CD8-positive, alpha-beta T cell (primary cell): ENCODE measurements at regions of chr12 and their contacts with region 1.

Region 1: GRCh38 chr12:42023733-42024494 is 120.8 kb downstream of the GXYLT1 start:
- DNase-seq: peak; percentile 41 to 82 (median 66)
- ATAC-seq: peak; percentile 90
- H3K4me3 ChIP-seq: peak overlapping the region; percentile 32 to 47
- H3K4me3 Mint-ChIP-seq: peak overlapping the region; percentile 78
- H3K27ac ChIP-seq: no peak overlapping the region
- H3K27ac Mint-ChIP-seq: no peak overlapping the region
- H3K4me1 ChIP-seq: peaks cover 4% of the 10 kb centered on the region
- H3K4me1 Mint-ChIP-seq: peaks cover 9% of the 10 kb centered on the region
- H3K27me3 ChIP-seq: no peaks in the 10 kb centered on the region
- H3K27me3 Mint-ChIP-seq: peaks cover 24% of the 10 kb centered on the region
- CTCF ChIP-seq: peak; percentile 95

Region 2: DNA sequence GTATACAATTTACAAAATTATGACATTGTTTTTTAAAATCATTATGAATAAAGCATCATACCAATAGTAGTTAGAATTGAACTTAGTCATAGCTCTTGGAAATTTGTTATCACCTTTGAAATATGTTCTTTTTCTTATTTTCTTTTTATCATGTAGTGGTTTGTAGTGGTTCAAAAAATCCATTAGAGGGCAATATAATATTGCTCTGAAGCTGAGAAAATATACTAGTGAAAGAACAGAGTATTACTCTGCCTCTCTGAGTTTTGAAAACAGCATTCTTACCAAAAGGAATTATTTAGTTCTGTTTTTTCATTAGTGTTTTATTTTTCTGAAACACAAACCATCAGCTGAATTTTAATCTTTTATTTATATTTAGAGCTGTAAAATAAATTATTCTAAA is 759.6 kb before region 1 on chr12:
- CTCF ChIA-PET with region 1: no interaction called
- POLR2A ChIA-PET with region 1: no interaction called
- intact Hi-C with region 1: loop called in 1 of 2 experiments (anchors 10 kb)
- DNase-seq: peak in 1 of 9 experiments; percentile 1
- ATAC-seq: no peak
- H3K4me3 ChIP-seq: no peak overlapping the region
- H3K4me3 Mint-ChIP-seq: no peak overlapping the region
- H3K27ac ChIP-seq: no peak overlapping the region
- H3K27ac Mint-ChIP-seq: no peak overlapping the region
- H3K4me1 ChIP-seq: no peaks in the 10 kb centered on the region
- H3K4me1 Mint-ChIP-seq: no peaks in the 10 kb centered on the region
- H3K27me3 ChIP-seq: no peaks in the 10 kb centered on the region
- H3K27me3 Mint-ChIP-seq: peaks cover 6% of the 10 kb centered on the region
- CTCF ChIP-seq: peak; percentile 19

Region 3: GRCh38 chr12:41365653-41366171 is 658.2 kb before region 1 on chr12:
- CTCF ChIA-PET with region 1: no interaction called
- POLR2A ChIA-PET with region 1: no interaction called
- intact Hi-C with region 1: no loop called
- DNase-seq: no peak
- ATAC-seq: no peak
- H3K4me3 ChIP-seq: no peak overlapping the region
- H3K4me3 Mint-ChIP-seq: no peak overlapping the region
- H3K27ac ChIP-seq: no peak overlapping the region
- H3K27ac Mint-ChIP-seq: no peak overlapping the region
- H3K4me1 ChIP-seq: no peaks in the 10 kb centered on the region
- H3K4me1 Mint-ChIP-seq: no peaks in the 10 kb centered on the region
- H3K27me3 ChIP-seq: no peaks in the 10 kb centered on the region
- H3K27me3 Mint-ChIP-seq: no peaks in the 10 kb centered on the region
- CTCF ChIP-seq: no peak

Region 4: GRCh38 chr12:41684997-41685396 is 338.9 kb before region 1 on chr12:
- CTCF ChIA-PET with region 1: no interaction called
- POLR2A ChIA-PET with region 1: no interaction called
- intact Hi-C with region 1: loop called in 1 of 2 experiments (anchors 5 kb)
- DNase-seq: no peak
- ATAC-seq: no peak
- H3K4me3 ChIP-seq: no peak overlapping the region
- H3K4me3 Mint-ChIP-seq: no peak overlapping the region
- H3K27ac ChIP-seq: no peak overlapping the region
- H3K27ac Mint-ChIP-seq: no peak overlapping the region
- H3K4me1 ChIP-seq: no peaks in the 10 kb centered on the region
- H3K4me1 Mint-ChIP-seq: no peaks in the 10 kb centered on the region
- H3K27me3 ChIP-seq: no peaks in the 10 kb centered on the region
- H3K27me3 Mint-ChIP-seq: no peaks in the 10 kb centered on the region
- CTCF ChIP-seq: no peak

Region 5: DNA sequence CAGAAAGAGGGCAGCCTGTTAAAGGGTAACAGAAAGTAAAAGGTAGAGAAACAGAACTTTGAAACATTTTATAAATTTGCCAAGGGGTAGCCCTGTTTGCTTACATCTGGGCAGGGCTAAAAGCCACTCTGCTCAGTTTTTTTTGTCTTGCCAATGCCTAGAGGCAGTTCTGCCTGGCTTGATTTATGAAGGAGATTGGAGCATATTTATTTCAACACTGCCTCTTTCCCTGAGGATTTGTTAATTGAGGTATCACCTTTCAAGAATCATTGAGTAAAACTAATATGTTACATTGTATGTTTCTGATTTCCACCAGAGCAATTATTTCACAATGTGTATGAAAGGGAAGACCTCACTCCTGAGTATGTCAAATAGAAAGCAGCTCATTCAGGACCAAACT is 40.1 kb before region 1 on chr12:
- CTCF ChIA-PET with region 1: no interaction called
- POLR2A ChIA-PET with region 1: no interaction called
- intact Hi-C with region 1: no loop called
- DNase-seq: no peak
- ATAC-seq: no peak
- H3K4me3 ChIP-seq: no peak overlapping the region
- H3K4me3 Mint-ChIP-seq: no peak overlapping the region
- H3K27ac ChIP-seq: no peak overlapping the region
- H3K27ac Mint-ChIP-seq: no peak overlapping the region
- H3K4me1 ChIP-seq: no peaks in the 10 kb centered on the region
- H3K4me1 Mint-ChIP-seq: no peaks in the 10 kb centered on the region
- H3K27me3 ChIP-seq: no peaks in the 10 kb centered on the region
- H3K27me3 Mint-ChIP-seq: peaks cover 21% of the 10 kb centered on the region
- CTCF ChIP-seq: no peak

Region 6: GRCh38 chr12:42039176-42039575 is 15.3 kb after region 1 on chr12:
- CTCF ChIA-PET with region 1: interaction called, 15 read pairs
- POLR2A ChIA-PET with region 1: no interaction called
- intact Hi-C with region 1: no loop called
- DNase-seq: no peak
- ATAC-seq: no peak
- H3K4me3 ChIP-seq: no peak overlapping the region
- H3K4me3 Mint-ChIP-seq: no peak overlapping the region
- H3K27ac ChIP-seq: no peak overlapping the region
- H3K27ac Mint-ChIP-seq: no peak overlapping the region
- H3K4me1 ChIP-seq: no peaks in the 10 kb centered on the region
- H3K4me1 Mint-ChIP-seq: no peaks in the 10 kb centered on the region
- H3K27me3 ChIP-seq: no peaks in the 10 kb centered on the region
- H3K27me3 Mint-ChIP-seq: peaks cover 8% of the 10 kb centered on the region
- CTCF ChIP-seq: no peak

Region 7: DNA sequence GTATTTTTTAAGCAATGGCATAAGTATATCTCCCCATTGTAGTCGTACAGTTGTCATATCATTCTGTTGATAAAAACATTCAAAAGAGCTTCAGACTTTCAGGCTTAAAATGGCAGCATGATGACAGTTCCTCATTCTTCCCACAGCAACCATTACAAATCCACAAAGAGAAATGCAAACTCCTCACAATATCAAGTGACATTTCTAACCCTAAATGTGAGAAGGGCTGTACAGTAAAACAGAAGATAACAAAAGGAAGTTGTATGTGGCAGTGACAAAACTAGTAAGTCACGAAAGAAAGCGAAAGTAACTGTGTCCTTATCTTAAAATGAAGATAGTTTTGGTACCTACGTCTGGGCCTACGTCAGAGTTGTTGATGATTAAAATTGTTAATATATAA is 74.1 kb after region 1 on chr12:
- CTCF ChIA-PET with region 1: interaction called, 13 read pairs
- POLR2A ChIA-PET with region 1: no interaction called
- intact Hi-C with region 1: no loop called
- DNase-seq: peak in 2 of 9 experiments; percentile 69 to 86
- ATAC-seq: peak; percentile 86
- H3K4me3 ChIP-seq: peak overlapping the region; percentile 39 to 53
- H3K4me3 Mint-ChIP-seq: peak overlapping the region; percentile 92
- H3K27ac ChIP-seq: peak overlapping the region; percentile 89
- H3K27ac Mint-ChIP-seq: peak overlapping the region; percentile 99
- H3K4me1 ChIP-seq: peaks cover 35% of the 10 kb centered on the region
- H3K4me1 Mint-ChIP-seq: peaks cover 50% of the 10 kb centered on the region
- H3K27me3 ChIP-seq: no peaks in the 10 kb centered on the region
- H3K27me3 Mint-ChIP-seq: no peaks in the 10 kb centered on the region
- CTCF ChIP-seq: no peak